ENCODE measurements at regions of chr15 and their contacts with region 1.

Region 1: DNA sequence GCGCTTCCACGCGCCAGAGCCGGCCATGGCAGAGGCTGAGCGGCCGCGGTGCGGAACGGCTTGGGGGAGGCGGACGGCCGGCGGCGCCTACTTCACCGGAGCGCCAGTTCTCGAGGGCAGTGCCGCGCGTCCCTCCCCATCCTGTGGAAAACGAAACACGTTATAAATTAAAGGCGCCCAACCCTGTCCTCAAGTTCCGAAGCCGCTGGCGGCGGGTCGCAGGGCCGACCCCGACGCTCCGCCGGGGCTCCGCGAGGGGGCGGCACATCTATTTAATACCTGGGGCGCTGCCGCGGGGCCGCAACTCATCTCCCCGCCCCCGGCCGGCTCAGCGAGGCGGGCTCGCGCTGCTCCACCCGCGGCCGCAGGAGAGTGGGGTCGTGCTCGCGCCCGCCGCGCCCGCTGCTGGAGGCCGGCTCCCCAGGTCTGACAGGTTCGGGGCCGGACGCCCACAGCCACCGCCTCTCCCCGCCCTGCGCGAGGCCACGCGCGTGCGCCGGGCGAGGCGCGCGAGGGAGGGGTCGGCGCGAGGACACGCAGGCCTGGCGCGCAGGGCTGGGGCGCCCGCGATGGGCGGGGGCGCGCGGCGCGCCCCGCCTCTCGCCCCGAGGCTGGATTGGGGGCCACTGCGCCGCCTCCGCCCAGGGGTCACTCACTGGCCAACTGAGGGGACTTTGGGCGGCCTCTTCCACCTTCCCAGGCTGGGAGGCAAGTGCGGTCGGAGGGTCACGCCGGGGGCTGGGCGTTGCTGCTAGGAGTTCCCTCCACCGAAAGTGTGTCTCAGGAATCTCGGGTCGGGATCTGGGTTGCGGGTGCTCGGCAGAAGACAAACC is at the start of gene SLC30A4:
- DNase-seq: peak; percentile 79
- ATAC-seq: peak; percentile 98 to 99
- total RNA-seq, gene SLC30A4: 4.9 to 5.0 TPM

Region 2: DNA sequence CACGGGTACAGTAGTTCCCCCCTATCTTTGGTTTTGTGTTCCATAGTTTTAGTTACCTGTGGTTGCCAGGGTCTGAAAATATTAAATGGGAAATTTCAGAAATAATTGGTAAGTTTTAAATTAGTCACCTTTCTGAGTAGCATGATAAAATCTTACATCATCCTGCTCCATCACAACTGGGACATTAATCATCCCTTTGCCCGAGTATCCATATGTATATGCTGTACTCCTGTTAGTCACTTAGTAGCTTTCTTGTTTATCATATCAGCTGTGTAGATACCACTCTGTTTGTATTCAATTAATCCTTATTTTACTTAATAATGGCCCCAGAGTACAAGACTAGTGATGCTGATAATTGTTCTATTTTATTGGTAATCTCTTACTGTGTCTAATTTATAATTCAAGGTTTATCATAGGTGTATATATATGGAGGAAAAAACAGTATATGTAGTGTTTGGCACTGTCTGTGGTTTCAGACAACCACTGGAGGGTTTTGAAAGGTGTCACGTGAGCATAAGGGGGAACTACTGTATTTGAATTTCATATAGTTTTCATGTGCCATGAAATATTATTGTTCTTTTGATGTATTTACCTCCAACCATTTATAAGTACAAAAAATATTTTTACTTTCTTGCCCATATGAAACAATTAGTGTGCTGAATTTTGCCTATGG is 1053.7 kb before region 1 on chr15:
- intact Hi-C with region 1: no loop called
- DNase-seq: no peak
- ATAC-seq: no peak

Region 3: GRCh38 chr15:45457641-45458433 is 64.7 kb before region 1 on chr15:
- intact Hi-C with region 1: no loop called
- DNase-seq: peak; percentile 54
- ATAC-seq: peak; percentile 74 to 77

Region 4: GRCh38 chr15:45587095-45587860 is 64.7 kb after region 1 on chr15 and contains the start of gene BLOC1S6:
- intact Hi-C with region 1: loop called in 1 of 2 experiments (anchors 2 kb)
- DNase-seq: peak; percentile 92
- ATAC-seq: peak; percentile 92
- total RNA-seq, gene BLOC1S6: 27.7 to 37.0 TPM

Region 5: DNA sequence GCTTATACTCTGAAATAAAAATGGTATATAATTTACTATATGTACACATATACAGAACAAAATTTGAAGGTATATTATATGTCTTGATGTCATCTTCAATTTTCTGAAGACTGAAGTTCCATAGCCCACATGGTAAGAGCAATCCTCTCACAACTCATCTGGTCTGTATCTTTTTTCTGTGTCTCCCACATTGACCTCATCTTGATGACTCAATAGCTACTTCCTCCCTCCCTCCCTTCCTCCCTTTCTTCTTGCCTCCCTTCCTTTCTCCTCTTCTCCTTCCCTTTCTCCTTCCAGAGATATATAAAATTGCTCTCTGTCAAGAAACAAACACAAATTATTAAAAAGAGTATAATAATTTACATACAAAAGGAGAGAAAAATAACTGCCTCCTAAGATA is 380.7 kb after region 1 on chr15:
- intact Hi-C with region 1: no loop called
- DNase-seq: no peak
- ATAC-seq: peak in 1 of 2 donors; percentile 31

Region 6: DNA sequence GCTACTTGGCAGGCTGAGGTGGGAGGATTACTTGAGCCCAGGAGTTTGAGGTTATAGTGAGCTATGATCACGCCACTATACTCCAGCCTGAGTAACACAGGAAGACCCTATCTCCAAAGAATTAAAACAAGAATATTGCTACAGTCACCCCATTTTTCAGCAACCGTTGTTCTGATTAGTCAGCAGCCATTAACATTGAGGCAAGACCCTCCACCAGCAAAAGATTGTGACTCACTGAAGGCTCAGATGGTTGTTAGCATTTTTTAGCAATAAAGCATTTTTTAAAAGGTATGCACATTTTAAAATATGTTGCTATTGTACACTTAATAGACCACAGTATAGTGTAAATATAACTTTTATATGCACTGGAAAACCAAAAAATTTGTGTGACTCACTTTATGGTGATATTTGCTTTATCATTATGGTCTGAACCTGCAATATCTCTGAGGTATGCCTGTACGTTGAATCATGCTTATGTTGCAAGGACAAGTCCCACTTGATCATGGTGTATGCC is 604.9 kb after region 1 on chr15:
- intact Hi-C with region 1: no loop called
- DNase-seq: no peak
- ATAC-seq: no peak

Measured in left cardiac atrium (tissue), 4 donors.